ENCODE measurements at regions of chr6 and their contacts with region 1.

Region 1: DNA sequence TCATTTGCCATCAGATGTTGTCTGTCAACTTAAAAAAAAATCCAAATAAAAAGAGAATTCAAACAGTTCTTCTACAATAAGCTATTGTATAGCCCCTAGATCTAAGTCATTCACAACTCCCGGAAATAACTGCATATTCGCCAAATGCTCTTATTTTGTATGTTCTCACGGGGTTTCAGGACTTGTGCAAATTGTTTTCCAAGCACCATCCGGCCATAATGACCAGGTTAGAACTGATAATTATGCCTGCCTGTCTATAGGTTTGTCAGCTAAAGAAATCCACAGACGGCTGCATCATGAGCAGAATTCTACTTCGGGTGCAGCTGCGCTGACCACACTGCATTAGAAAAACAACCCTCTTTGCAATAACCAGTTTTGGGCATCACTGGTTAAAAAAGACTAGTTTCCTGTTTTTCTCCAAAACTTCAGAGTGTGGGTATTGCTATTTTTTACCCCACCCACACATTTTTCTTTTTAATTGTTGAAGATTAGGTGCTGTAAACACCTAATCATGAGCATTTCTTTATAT is 87.7 kb downstream of the HIVEP2 start:
- DNase-seq: peak in 5 of 9 experiments; percentile 27 to 69 (median 56)
- ATAC-seq: peak; percentile 25
- H3K4me3 ChIP-seq: peak overlapping the region; percentile 39 to 48
- H3K4me3 Mint-ChIP-seq: peak overlapping the region; percentile 78
- H3K27ac ChIP-seq: peak overlapping the region; percentile 70 to 77
- H3K27ac Mint-ChIP-seq: peak overlapping the region; percentile 97
- H3K4me1 ChIP-seq: peaks cover 86% of the 10 kb centered on the region
- H3K4me1 Mint-ChIP-seq: peaks cover 88% of the 10 kb centered on the region
- H3K27me3 ChIP-seq: no peaks in the 10 kb centered on the region
- H3K27me3 Mint-ChIP-seq: no peaks in the 10 kb centered on the region
- CTCF ChIP-seq: no peak

Region 2: GRCh38 chr6:142845624-142846458 is 11.5 kb before region 1 on chr6:
- CTCF ChIA-PET with region 1: interaction called, 15 read pairs
- POLR2A ChIA-PET with region 1: interaction called, 32 read pairs
- intact Hi-C with region 1: loop called in 1 of 2 experiments (anchors 1 kb)
- DNase-seq: peak in 8 of 9 experiments; percentile 42 to 84 (median 72)
- ATAC-seq: peak; percentile 43
- H3K4me3 ChIP-seq: peak overlapping the region; percentile 43 to 48
- H3K4me3 Mint-ChIP-seq: peak overlapping the region; percentile 87
- H3K27ac ChIP-seq: peak overlapping the region; percentile 66 to 82
- H3K27ac Mint-ChIP-seq: peak overlapping the region; percentile 97
- H3K4me1 ChIP-seq: peaks cover 80% of the 10 kb centered on the region
- H3K4me1 Mint-ChIP-seq: peaks cover 92% of the 10 kb centered on the region
- H3K27me3 ChIP-seq: no peaks in the 10 kb centered on the region
- H3K27me3 Mint-ChIP-seq: no peaks in the 10 kb centered on the region
- CTCF ChIP-seq: no peak

Region 3: DNA sequence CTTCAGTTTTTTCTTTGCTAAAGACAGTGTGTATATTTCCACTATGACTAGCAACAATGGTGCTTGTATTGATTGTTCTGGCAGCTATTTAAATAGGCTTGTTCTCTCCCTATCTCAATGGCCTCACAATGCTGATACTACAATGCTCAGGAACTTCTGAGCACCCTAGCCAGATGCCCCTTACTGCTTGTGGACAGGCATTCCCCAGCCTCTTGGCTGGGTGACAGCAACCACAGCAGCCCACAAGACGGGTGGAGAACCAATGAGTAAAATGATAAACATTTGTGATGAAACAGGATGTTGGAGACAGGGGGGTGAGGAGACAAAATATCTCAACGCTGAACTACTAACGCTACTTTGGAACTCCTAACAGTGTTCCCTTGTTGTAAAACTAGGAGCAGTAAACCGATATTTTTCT is 45.3 kb after region 1 on chr6:
- CTCF ChIA-PET with region 1: interaction called, 4 read pairs
- POLR2A ChIA-PET with region 1: interaction called, 6 read pairs
- intact Hi-C with region 1: loop called in 1 of 2 experiments (anchors 5 kb)
- DNase-seq: peak; percentile 53 to 95 (median 81)
- ATAC-seq: peak; percentile 58
- H3K4me3 ChIP-seq: peak overlapping the region; percentile 1 to 33
- H3K4me3 Mint-ChIP-seq: peak overlapping the region; percentile 70
- H3K27ac ChIP-seq: peak overlapping the region; percentile 82 to 87
- H3K27ac Mint-ChIP-seq: peak overlapping the region; percentile 98
- H3K4me1 ChIP-seq: peaks cover 91% of the 10 kb centered on the region
- H3K4me1 Mint-ChIP-seq: peaks cover 63% of the 10 kb centered on the region
- H3K27me3 ChIP-seq: no peaks in the 10 kb centered on the region
- H3K27me3 Mint-ChIP-seq: no peaks in the 10 kb centered on the region
- CTCF ChIP-seq: no peak

Region 4: DNA sequence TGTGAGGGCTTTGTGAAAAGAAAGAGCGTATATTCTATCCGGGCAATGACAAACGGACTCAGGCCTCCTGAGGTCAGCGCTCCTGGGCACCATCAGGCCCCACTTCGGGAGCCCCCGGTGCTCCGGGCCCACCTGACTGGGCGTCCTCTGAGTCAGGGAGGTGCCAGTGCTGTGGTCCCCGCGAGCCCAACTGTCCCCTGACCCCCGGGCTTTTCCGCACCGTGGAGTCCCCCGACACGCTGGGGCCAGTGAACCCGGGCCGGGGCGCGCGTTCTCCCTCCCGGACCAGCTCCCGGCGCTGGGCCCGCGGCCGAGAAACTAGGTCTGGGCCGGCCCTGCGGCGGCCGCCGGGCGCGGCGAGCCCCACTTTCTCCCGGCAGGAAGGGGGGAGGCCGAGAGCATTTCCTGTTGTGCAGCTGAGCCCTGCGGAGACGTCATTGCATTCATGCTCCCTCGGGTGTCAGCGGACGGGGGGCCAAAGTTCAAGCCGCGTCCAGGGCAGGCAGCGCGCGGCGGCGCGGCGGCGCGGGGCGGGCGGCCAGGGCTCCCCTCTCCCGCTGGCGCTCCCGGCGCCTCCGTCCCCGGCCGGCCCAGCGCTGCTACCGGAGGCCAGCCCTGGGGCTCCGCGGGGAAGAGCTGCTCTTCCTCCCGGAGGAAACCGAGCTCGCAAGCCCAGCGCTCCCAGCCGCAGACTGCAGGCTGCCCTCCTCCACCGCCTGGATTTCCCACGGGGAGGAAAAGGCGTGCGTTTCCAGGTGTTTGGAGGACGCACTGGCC is 69.4 kb after region 1 on chr6:
- CTCF ChIA-PET with region 1: interaction called, 3 read pairs
- POLR2A ChIA-PET with region 1: interaction called, 40 read pairs
- intact Hi-C with region 1: no loop called
- DNase-seq: peak; percentile 68 to 93 (median 81)
- ATAC-seq: peak; percentile 81
- H3K4me3 ChIP-seq: peak overlapping the region; percentile 76 to 86
- H3K4me3 Mint-ChIP-seq: peak overlapping the region; percentile 91
- H3K27ac ChIP-seq: peak overlapping the region; percentile 99
- H3K27ac Mint-ChIP-seq: peak overlapping the region; percentile 98
- H3K4me1 ChIP-seq: peaks cover 47% of the 10 kb centered on the region
- H3K4me1 Mint-ChIP-seq: peaks cover 63% of the 10 kb centered on the region
- H3K27me3 ChIP-seq: no peaks in the 10 kb centered on the region
- H3K27me3 Mint-ChIP-seq: no peaks in the 10 kb centered on the region
- CTCF ChIP-seq: no peak

Measured in CD8-positive, alpha-beta T cell (primary cell).